ENCODE measurements at regions of chr3 and their contacts with region 1.

Region 1: GRCh38 chr3:192917404-192918274 is at the start of gene MB21D2:
- DNase-seq: no peak
- ATAC-seq: peak; percentile 96
- H3K4me3 ChIP-seq: peak within 1 kb of the TSS; percentile 75 to 93
- H3K27ac ChIP-seq: peak within 1 kb of the TSS; percentile 86
- H3K4me1 ChIP-seq: peaks cover 22% of the 10 kb centered on the region
- H3K27me3 ChIP-seq: no peaks in the 10 kb centered on the region
- CTCF ChIP-seq: no peak
- total RNA-seq, gene MB21D2: 7.8 TPM

Region 2: GRCh38 chr3:192887047-192887446 is 30.6 kb before region 1 on chr3:
- CTCF ChIA-PET with region 1: interaction called, 12 read pairs
- POLR2A ChIA-PET with region 1: interaction called, 4 read pairs
- in situ Hi-C with region 1: no loop called
- intact Hi-C with region 1: loop called (anchors 2 kb)
- DNase-seq: peak; percentile 74
- ATAC-seq: peak; percentile 50; the same call in 1 of the 2 replicates
- H3K4me3 ChIP-seq: peak overlapping the region; percentile 20 to 61
- H3K27ac ChIP-seq: peak overlapping the region; percentile 80
- H3K4me1 ChIP-seq: peaks cover 83% of the 10 kb centered on the region
- H3K27me3 ChIP-seq: no peaks in the 10 kb centered on the region
- CTCF ChIP-seq: no peak

Region 3: DNA sequence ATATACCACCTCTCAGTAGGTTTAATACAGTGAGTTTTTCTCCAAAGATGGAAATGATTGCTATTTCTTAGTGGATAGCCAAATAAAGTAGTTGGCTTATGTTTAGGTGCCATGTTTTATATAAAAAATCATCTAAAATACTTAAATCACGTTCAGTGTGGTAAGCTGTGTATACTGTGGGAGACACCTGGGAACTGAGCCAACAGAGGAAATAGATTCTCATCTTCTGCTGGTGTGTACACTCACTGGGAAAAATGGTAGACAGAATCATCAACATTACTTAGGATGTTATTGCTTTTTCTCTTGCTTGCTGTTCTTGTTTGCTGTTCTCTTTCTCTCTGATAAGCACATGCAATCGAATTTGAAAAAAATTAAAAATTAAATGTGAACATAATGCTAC is 112.6 kb after region 1 on chr3:
- CTCF ChIA-PET with region 1: no interaction called
- POLR2A ChIA-PET with region 1: interaction called, 13 read pairs
- in situ Hi-C with region 1: no loop called
- intact Hi-C with region 1: no loop called
- DNase-seq: no peak
- ATAC-seq: no peak
- H3K4me3 ChIP-seq: no peak overlapping the region
- H3K27ac ChIP-seq: no peak overlapping the region
- H3K4me1 ChIP-seq: no peaks in the 10 kb centered on the region
- H3K27me3 ChIP-seq: peaks cover 16% of the 10 kb centered on the region
- CTCF ChIP-seq: no peak

Region 4: DNA sequence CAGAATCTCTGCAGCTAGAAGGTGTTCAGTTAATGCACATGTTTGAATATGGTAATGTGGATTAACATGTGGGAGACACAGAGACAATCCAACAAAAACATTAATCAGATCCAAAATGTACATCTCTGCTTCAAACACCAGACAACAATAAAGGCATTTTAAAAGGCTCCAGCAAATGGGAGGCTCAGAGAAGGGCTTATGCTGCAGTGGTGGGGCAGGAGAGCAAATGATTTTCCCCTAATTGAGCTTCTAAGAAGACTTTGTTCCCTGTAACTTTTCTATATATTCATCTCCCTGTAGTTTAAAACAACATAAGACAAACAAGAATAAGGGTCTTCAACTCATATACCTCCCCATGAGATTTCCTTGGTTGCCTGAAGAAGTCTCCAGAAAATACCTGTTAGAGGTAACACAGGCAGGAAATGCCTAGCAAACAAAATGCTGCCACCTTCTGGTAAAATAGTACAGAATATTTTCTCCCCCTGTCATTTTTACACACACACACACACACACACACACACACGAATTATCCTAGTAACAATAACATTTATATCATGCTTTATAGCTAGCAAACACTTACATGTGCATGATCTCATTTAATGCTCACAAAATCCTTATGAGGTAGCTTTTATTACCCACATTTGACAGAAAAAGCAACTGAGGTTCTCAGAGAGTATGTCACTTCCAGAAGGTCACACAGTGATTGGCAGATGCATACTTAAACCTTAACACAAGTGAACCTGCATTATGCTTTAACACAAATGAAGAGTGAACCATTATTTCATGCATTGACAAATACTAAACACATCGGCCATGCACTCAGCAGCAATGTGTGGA is 123.4 kb after region 1 on chr3:
- CTCF ChIA-PET with region 1: no interaction called
- POLR2A ChIA-PET with region 1: no interaction called
- in situ Hi-C with region 1: no loop called
- intact Hi-C with region 1: loop called (anchors 5 kb)
- DNase-seq: peak; percentile 13
- ATAC-seq: peak; percentile 77
- H3K4me3 ChIP-seq: no peak overlapping the region
- H3K27ac ChIP-seq: no peak overlapping the region
- H3K4me1 ChIP-seq: no peaks in the 10 kb centered on the region
- H3K27me3 ChIP-seq: no peaks in the 10 kb centered on the region; the same call in 1 of the 2 replicates
- CTCF ChIP-seq: peak; percentile 70; the same call in 1 of the 2 replicates

Region 5: GRCh38 chr3:193068365-193068764 is 150.7 kb after region 1 on chr3:
- CTCF ChIA-PET with region 1: no interaction called
- POLR2A ChIA-PET with region 1: no interaction called
- in situ Hi-C with region 1: no loop called
- intact Hi-C with region 1: no loop called
- DNase-seq: no peak
- ATAC-seq: no peak
- H3K4me3 ChIP-seq: no peak overlapping the region
- H3K27ac ChIP-seq: no peak overlapping the region
- H3K4me1 ChIP-seq: no peaks in the 10 kb centered on the region
- H3K27me3 ChIP-seq: 0 out of 2 replicates have a peak, but pooled peaks cover 4% of the 10 kb centered on the region
- CTCF ChIP-seq: no peak

Region 6: GRCh38 chr3:193630005-193630404 is 712.4 kb after region 1 on chr3:
- CTCF ChIA-PET with region 1: no interaction called
- POLR2A ChIA-PET with region 1: no interaction called
- in situ Hi-C with region 1: no loop called
- intact Hi-C with region 1: no loop called
- DNase-seq: no peak
- ATAC-seq: no peak
- H3K4me3 ChIP-seq: no peak overlapping the region
- H3K27ac ChIP-seq: no peak overlapping the region
- H3K4me1 ChIP-seq: no peaks in the 10 kb centered on the region
- H3K27me3 ChIP-seq: no peaks in the 10 kb centered on the region
- CTCF ChIP-seq: no peak